Body of pancreas (tissue), 4 donors: ENCODE measurements at regions of chr18 and their contacts with region 1.

Region 1: DNA sequence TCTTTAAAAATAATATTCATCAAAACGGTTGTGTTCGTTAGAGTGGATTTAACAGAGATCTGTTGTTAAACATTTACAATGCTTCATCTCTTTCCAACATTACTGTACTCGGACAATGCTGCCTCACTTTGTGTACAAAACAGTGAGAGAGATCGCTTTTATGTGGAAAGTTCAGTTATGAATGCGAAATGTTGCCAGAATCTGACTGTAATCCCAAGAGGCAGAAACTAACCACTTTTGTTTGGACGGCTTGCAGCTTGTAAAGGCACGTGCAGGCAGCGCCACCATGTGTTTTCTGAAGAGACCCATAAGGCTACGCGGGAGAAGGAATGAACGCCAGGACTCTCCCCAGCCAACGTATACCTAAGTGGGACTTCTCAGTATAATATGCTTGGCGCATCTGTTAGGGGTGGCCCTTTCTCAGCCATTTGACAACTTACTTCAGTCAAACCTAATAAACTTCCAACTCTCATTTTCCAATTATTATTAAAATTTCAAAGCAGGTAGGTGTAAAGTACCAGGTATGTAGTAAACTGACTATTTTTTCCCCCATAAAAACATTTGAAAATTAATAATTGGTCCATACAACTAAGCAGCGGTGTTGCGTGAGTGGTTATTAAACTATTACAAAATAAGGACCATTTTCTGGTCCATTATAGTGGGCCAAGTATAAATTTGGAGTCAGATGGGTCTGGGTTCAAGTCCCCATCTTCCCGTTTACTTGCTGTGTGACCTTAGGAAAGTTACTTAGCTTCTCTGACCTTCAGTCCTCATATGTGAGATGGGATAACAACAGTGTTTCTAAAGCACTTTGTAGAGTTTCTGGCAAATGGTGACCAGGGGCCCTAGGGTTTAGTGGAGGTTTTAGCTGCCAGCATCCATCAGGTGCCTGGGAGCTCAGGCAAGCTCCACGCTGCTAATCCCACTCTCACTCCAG is 5.6 kb upstream of the NAPG start:
- DNase-seq: peak; percentile 86 to 91 (median 90)
- ATAC-seq: peak; percentile 83
- H3K4me3 ChIP-seq: no peak overlapping the region
- H3K27ac ChIP-seq: peak overlapping the region in 1 of 4 donors; percentile 19
- H3K4me1 ChIP-seq: peaks cover 31% of the 10 kb centered on the region
- H3K27me3 ChIP-seq: no peaks in the 10 kb centered on the region
- CTCF ChIP-seq: peak; percentile 64 to 92 (median 90)
- POLR2A ChIP-seq: no peak

Region 2: GRCh38 chr18:9965711-9966624 is 554.3 kb before region 1 on chr18:
- intact Hi-C with region 1: loop called (anchors 5 kb)
- DNase-seq: no peak
- ATAC-seq: no peak
- H3K4me3 ChIP-seq: no peak overlapping the region
- H3K27ac ChIP-seq: no peak overlapping the region
- H3K4me1 ChIP-seq: no peaks in the 10 kb centered on the region
- H3K27me3 ChIP-seq: no peaks in the 10 kb centered on the region
- CTCF ChIP-seq: no peak
- POLR2A ChIP-seq: no peak

Region 3: GRCh38 chr18:10750191-10751035 is 230.1 kb after region 1 on chr18:
- intact Hi-C with region 1: no loop called
- DNase-seq: no peak
- ATAC-seq: no peak
- H3K4me3 ChIP-seq: no peak overlapping the region
- H3K27ac ChIP-seq: no peak overlapping the region
- H3K4me1 ChIP-seq: no peaks in the 10 kb centered on the region
- H3K27me3 ChIP-seq: no peaks in the 10 kb centered on the region
- CTCF ChIP-seq: no peak
- POLR2A ChIP-seq: no peak